Mammary epithelial cell (primary cell): ENCODE measurements at regions of chr22 and their contacts with region 1.

Region 1: GRCh38 chr22:43616645-43617044 is 195.5 kb downstream of the EFCAB6 start:
- DNase-seq: no peak
- H3K4me3 ChIP-seq: no peak overlapping the region
- H3K27ac ChIP-seq: no peak overlapping the region
- H3K4me1 ChIP-seq: no peaks in the 10 kb centered on the region
- H3K27me3 ChIP-seq: no peaks in the 10 kb centered on the region
- CTCF ChIP-seq: no peak

Region 2: DNA sequence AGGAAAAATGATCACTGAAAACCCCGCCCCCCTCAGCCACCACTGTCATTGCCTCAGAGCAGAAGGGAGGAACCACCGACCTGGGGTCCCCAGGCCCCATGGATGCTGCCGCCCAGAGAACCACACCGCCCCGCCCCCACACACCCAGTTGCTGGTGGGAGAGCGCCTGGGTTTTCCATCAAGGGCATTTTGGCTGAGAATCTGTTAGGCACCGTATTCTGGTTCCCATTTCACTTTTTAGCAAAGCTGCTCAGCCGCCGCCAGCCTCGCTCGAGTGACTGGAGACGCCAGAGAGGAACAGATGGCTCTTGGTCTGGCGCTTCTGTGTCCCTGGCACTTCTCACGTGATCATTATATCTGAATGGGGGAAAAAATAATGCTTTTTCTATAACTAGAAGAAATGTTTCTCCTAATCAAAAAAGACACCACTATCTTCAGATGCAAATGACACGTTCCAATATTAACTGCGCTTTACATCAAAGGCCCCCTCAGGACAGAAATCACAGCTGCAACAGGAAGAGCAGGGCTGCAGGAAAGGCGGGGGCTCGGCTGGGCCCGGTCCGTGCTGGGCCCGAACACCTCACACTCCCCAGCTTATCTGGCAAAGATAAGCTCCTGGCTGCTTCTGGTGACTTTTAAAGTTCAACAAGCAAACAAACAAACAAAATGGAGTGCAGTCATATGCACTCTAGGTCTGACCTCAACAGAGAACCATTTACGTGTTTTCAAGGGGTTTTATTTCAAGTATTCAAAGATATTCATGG is 55.0 kb before region 1 on chr22:
- CTCF ChIA-PET with region 1: no interaction called
- dilution Hi-C with region 1: loop called (anchors 10 kb)
- in situ Hi-C with region 1: no loop called
- intact Hi-C with region 1: no loop called
- DNase-seq: no peak
- H3K4me3 ChIP-seq: no peak overlapping the region
- H3K27ac ChIP-seq: no peak overlapping the region
- H3K4me1 ChIP-seq: no peaks in the 10 kb centered on the region
- H3K27me3 ChIP-seq: no peaks in the 10 kb centered on the region
- CTCF ChIP-seq: no peak

Region 3: DNA sequence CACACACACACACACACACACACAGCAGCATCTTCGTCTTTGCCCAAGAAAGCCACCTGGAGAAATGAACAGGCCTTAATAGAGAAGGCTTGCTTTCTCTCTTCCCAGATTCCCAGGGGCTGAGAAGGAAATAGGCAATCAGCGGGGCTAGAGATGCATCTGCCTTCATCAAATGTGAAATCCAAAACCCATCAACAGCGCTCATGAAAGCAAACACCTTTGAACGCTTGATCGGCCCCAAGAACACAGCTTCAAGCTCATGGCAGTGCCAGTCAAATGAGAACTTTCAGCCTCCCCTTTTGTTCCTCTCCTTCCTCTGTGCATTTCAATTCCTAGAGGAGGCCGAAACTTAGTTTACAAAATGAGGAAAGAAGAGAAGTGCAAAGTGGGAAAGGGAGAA is 72.7 kb after region 1 on chr22:
- CTCF ChIA-PET with region 1: no interaction called
- dilution Hi-C with region 1: no loop called
- in situ Hi-C with region 1: no loop called
- intact Hi-C with region 1: no loop called
- DNase-seq: no peak
- H3K4me3 ChIP-seq: no peak overlapping the region
- H3K27ac ChIP-seq: no peak overlapping the region
- H3K4me1 ChIP-seq: no peaks in the 10 kb centered on the region
- H3K27me3 ChIP-seq: peaks cover 3% of the 10 kb centered on the region
- CTCF ChIP-seq: no peak

Region 4: DNA sequence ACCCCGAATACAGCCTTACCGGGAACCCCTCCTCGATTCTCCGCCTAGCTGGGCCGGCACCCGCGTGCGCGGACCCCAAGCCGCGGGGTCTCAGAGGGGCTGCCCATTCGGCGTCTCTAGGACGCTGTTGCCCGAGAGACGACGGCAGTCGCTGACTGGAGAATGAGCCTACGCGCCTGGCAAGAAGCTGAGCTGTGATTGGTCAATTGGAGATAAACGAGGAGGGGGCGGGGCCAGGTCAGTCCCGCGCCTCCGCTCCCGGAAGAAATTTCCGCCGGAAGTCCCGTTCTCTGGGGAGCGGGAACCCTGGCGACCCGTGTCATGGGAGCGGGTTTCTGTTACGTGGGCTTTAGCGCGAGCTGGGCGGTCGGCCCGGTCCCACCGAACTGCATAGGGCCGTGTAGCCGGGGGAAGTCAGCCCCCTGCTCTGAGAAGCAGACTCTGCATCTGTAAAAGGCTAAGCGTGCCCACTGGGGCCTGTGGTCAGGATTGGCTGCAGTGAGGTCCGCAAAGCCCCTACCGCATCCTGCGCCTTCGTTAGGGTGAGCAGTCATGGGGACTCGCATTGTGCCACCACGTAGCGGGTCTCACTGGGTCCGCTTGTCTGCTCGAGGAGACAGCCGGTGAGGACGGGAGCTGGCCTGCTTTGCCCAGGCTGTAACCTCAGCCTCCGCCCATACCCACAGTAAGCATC is 195.7 kb after region 1 on chr22 and contains the start of gene EFCAB6:
- CTCF ChIA-PET with region 1: no interaction called
- dilution Hi-C with region 1: no loop called
- in situ Hi-C with region 1: no loop called
- intact Hi-C with region 1: no loop called
- DNase-seq: peak; percentile 87
- H3K4me3 ChIP-seq: peak within 1 kb of the TSS; percentile 63 to 89 (median 73)
- H3K27ac ChIP-seq: peak within 1 kb of the TSS; percentile 71
- H3K4me1 ChIP-seq: peaks cover 17% of the 10 kb centered on the region
- H3K27me3 ChIP-seq: no peaks in the 10 kb centered on the region
- CTCF ChIP-seq: no peak
- total RNA-seq, gene EFCAB6: 0.59 to 2.0 TPM